PC-9 (cell line): ENCODE measurements at regions of chr3 and their contacts with region 1.

Region 1: GRCh38 chr3:136624894-136625815 is 127.0 kb downstream of the STAG1 start:
- DNase-seq: peak; percentile 55 to 92
- H3K4me3 ChIP-seq: no peak overlapping the region
- H3K27ac ChIP-seq: peak overlapping the region; percentile 45; the same call in 1 of the 2 replicates
- H3K4me1 ChIP-seq: peaks cover 53% of the 10 kb centered on the region
- H3K27me3 ChIP-seq: no peaks in the 10 kb centered on the region
- CTCF ChIP-seq: no peak

Region 2: DNA sequence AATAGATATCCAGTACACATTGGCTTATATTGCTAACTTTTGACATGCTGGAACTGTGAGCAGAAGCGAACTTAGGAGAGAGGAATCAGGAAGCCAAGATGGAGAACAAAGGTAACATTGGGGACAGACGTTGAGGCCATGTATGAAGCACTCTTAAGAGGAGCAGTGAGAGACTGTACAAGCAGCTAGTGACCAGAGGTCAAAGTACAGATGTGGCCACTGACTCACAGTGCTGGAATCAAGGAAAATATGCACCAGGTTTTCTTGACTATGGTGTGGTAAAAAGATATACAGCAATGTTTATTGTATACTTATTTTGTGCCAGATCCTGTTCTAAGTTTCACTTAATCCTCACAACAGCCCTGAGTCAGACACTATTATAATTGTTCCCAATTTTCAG is 330.7 kb after region 1 on chr3:
- CTCF ChIA-PET with region 1: no interaction called
- POLR2A ChIA-PET with region 1: no interaction called
- intact Hi-C with region 1: loop called (anchors 5 kb)
- DNase-seq: peak; percentile 57 to 92
- H3K4me3 ChIP-seq: peak overlapping the region; percentile 8; the same call in 1 of the 2 replicates
- H3K27ac ChIP-seq: peak overlapping the region; percentile 86
- H3K4me1 ChIP-seq: peaks cover 73% of the 10 kb centered on the region
- H3K27me3 ChIP-seq: no peaks in the 10 kb centered on the region
- CTCF ChIP-seq: no peak

Region 3: DNA sequence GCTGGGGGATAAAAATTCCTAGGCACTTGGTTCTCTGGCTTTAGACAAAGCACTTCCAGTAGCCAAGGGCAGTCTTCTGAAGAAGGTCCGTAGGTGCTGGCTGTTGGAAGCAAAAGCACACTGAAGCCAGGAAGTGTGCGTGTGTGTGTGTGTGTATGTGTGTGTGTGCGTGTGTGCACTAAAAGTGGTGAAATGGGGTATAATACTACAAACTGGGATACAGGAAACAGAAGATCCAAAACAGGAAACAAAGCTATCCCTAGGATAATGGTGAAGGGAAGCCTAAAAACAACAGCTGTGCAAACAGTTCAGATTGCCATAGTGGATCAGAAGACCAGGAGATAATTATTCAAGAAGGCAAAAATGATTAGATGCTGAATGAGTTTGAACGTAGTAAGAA is 436.0 kb after region 1 on chr3:
- CTCF ChIA-PET with region 1: no interaction called
- POLR2A ChIA-PET with region 1: no interaction called
- intact Hi-C with region 1: no loop called
- DNase-seq: no peak
- H3K4me3 ChIP-seq: no peak overlapping the region
- H3K27ac ChIP-seq: no peak overlapping the region
- H3K4me1 ChIP-seq: no peaks in the 10 kb centered on the region
- H3K27me3 ChIP-seq: peaks cover 19% of the 10 kb centered on the region
- CTCF ChIP-seq: no peak